Naive thymus-derived CD4-positive, alpha-beta T cell (primary cell): ENCODE measurements at regions of chr11 and their contacts with region 1.

Region 1: GRCh38 chr11:58654079-58654907 is 31.8 kb downstream of the CNTF start:
- DNase-seq: peak; percentile 56 to 81 (median 73)
- ATAC-seq: peak; percentile 98
- H3K4me3 ChIP-seq: no peak overlapping the region
- H3K4me3 Mint-ChIP-seq: no peak overlapping the region
- H3K27ac ChIP-seq: no peak overlapping the region
- H3K27ac Mint-ChIP-seq: peak overlapping the region in 3 of 9 donors; percentile 18 to 33 (median 27)
- H3K4me1 ChIP-seq: no peaks in the 10 kb centered on the region
- H3K4me1 Mint-ChIP-seq: peaks cover 0 to 11% (median 5%) of the 10 kb centered on the region in 7 donors
- H3K27me3 ChIP-seq: no peaks in the 10 kb centered on the region
- H3K27me3 Mint-ChIP-seq: peaks cover 0 to 3% (median 0%) of the 10 kb centered on the region in 5 donors

Region 2: GRCh38 chr11:58675334-58676155 is 21.3 kb after region 1 on chr11:
- CTCF ChIA-PET with region 1: interaction called, 15 read pairs
- POLR2A ChIA-PET with region 1: no interaction called
- intact Hi-C with region 1: loop called (anchors 1 to 2 kb)
- DNase-seq: peak; percentile 37 to 75 (median 65)
- ATAC-seq: peak; percentile 83
- H3K4me3 ChIP-seq: no peak overlapping the region
- H3K4me3 Mint-ChIP-seq: no peak overlapping the region
- H3K27ac ChIP-seq: no peak overlapping the region
- H3K27ac Mint-ChIP-seq: no peak overlapping the region
- H3K4me1 ChIP-seq: no peaks in the 10 kb centered on the region
- H3K4me1 Mint-ChIP-seq: no peaks in the 10 kb centered on the region
- H3K27me3 ChIP-seq: peaks cover 0 to 4% of the 10 kb centered on the region in 2 donors
- H3K27me3 Mint-ChIP-seq: peaks cover 0 to 5% (median 0%) of the 10 kb centered on the region in 5 donors

Region 3: GRCh38 chr11:58788355-58789023 is 134.2 kb after region 1 on chr11:
- CTCF ChIA-PET with region 1: interaction called, 104 read pairs
- POLR2A ChIA-PET with region 1: no interaction called
- intact Hi-C with region 1: loop called (anchors 1 kb)
- DNase-seq: peak in 8 of 9 donors; percentile 27 to 79 (median 74)
- ATAC-seq: peak; percentile 93
- H3K4me3 ChIP-seq: no peak overlapping the region
- H3K4me3 Mint-ChIP-seq: no peak overlapping the region
- H3K27ac ChIP-seq: no peak overlapping the region
- H3K27ac Mint-ChIP-seq: peak overlapping the region in 1 of 9 donors; percentile 77
- H3K4me1 ChIP-seq: no peaks in the 10 kb centered on the region
- H3K4me1 Mint-ChIP-seq: peaks cover 0 to 4% (median 0%) of the 10 kb centered on the region in 7 donors
- H3K27me3 ChIP-seq: no peaks in the 10 kb centered on the region
- H3K27me3 Mint-ChIP-seq: peaks cover 1 to 21% (median 6%) of the 10 kb centered on the region in 5 donors

Region 4: GRCh38 chr11:58923300-58923788 is 269.1 kb after region 1 on chr11:
- CTCF ChIA-PET with region 1: no interaction called
- POLR2A ChIA-PET with region 1: no interaction called
- intact Hi-C with region 1: loop called in 1 of 2 experiments (anchors 1 kb)
- DNase-seq: peak in 7 of 9 donors; percentile 7 to 44 (median 29)
- ATAC-seq: peak; percentile 66
- H3K4me3 ChIP-seq: no peak overlapping the region
- H3K4me3 Mint-ChIP-seq: peak overlapping the region in 8 of 10 donors; percentile 22 to 77 (median 45)
- H3K27ac ChIP-seq: no peak overlapping the region
- H3K27ac Mint-ChIP-seq: peak overlapping the region in 3 of 9 donors; percentile 33 to 74 (median 40)
- H3K4me1 ChIP-seq: peaks cover 0 to 6% of the 10 kb centered on the region in 2 donors
- H3K4me1 Mint-ChIP-seq: peaks cover 6 to 26% (median 22%) of the 10 kb centered on the region in 7 donors
- H3K27me3 ChIP-seq: no peaks in the 10 kb centered on the region
- H3K27me3 Mint-ChIP-seq: peaks cover 0 to 10% (median 6%) of the 10 kb centered on the region in 5 donors

Region 5: DNA sequence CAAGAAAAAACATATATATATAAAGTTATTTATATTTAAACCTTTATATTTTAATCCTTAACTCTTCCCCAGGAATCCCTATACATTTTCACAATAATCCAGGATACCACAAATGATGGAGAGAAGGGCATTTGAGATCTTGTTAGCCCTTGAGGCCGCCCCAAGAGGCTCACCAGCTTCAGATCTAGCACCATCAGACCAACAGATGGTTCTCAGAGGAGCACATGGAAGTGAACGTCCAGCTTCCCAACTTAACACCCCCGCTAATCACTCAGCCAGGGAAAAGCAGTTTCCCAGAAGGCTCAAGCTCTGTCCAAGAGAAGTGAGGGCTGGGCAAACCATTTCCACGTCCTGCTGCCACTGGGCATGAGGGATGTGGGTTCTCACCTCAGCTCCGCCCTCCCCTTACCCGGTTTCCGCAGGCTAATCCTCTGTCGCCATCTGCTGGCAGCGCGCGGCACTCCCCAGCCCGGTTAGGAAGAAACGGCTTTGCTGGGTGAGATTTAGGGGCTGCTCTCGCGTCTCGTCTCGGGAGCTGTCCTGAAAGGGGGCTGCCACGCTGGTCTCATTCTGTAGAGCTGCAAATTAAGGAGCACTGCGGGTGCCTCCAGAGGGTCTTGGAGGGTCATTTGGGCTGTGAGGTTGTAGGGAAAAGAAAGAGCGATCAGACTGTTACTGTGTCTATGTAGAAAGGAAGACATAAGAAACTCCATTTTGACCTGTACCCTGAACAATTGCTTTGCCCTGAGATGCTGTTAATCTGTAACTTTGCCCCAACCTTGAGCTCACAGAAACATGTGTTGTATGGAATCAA is 481.6 kb after region 1 on chr11:
- CTCF ChIA-PET with region 1: no interaction called
- POLR2A ChIA-PET with region 1: no interaction called
- intact Hi-C with region 1: loop called (anchors 1 to 2 kb)
- DNase-seq: peak; percentile 72 to 92 (median 84)
- ATAC-seq: peak; percentile 100
- H3K4me3 ChIP-seq: no peak overlapping the region
- H3K4me3 Mint-ChIP-seq: peak overlapping the region in 9 of 10 donors; percentile 41 to 85 (median 66)
- H3K27ac ChIP-seq: no peak overlapping the region
- H3K27ac Mint-ChIP-seq: peak overlapping the region in 5 of 9 donors; percentile 0 to 87 (median 68)
- H3K4me1 ChIP-seq: peaks cover 4 to 5% of the 10 kb centered on the region in 2 donors
- H3K4me1 Mint-ChIP-seq: peaks cover 3 to 33% (median 10%) of the 10 kb centered on the region in 7 donors
- H3K27me3 ChIP-seq: no peaks in the 10 kb centered on the region
- H3K27me3 Mint-ChIP-seq: no peaks in the 10 kb centered on the region